ENCODE measurements at regions of chr1 and their contacts with region 1.

Region 1: GRCh38 chr1:50774759-50775351 is 185.2 kb downstream of the FAF1 start:
- DNase-seq: no peak
- ATAC-seq: peak; percentile 58
- H3K4me3 Mint-ChIP-seq: no peak overlapping the region
- H3K27ac Mint-ChIP-seq: no peak overlapping the region
- H3K4me1 Mint-ChIP-seq: no peaks in the 10 kb centered on the region
- H3K27me3 Mint-ChIP-seq: no peaks in the 10 kb centered on the region

Region 2: DNA sequence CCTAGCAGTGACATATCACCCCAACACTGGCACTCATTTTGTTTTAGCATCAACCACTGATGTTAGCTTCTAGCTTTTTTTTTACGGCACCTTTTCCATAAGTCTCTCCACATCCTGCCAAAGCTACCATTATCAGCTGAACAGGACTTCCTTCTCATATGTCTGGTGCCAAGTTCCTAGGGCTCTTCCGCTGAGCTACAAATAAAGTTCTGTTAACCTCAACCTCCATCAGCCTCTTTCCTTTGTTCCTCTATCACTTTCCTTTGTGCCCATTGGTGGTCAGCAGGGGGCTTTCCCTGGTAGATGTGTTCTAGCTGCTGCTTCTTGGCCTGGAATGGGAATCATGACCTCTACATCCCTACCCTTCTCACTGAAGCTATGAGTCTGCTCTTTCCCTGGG is 21.4 kb after region 1 on chr1:
- CTCF ChIA-PET with region 1: interaction called, 22 read pairs
- POLR2A ChIA-PET with region 1: no interaction called
- DNase-seq: no peak
- ATAC-seq: no peak
- H3K4me3 Mint-ChIP-seq: no peak overlapping the region
- H3K27ac Mint-ChIP-seq: no peak overlapping the region
- H3K4me1 Mint-ChIP-seq: peaks cover 7% of the 10 kb centered on the region
- H3K27me3 Mint-ChIP-seq: no peaks in the 10 kb centered on the region

Measured in activated CD8-positive, alpha-beta T cell treated with anti-CD3 and anti-CD28 coated beads, Interleukin-2, amount 10 ng/mL, durations not matched to agents 7 days and 5 days (primary cell).